GM10248 (cell line): ENCODE measurements at regions of chr5 and their contacts with region 1.

Region 1: GRCh38 chr5:172973127-172973916 is 10.2 kb upstream of the ATP6V0E1 start:
- DNase-seq: no peak
- CTCF ChIP-seq: no peak

Region 2: DNA sequence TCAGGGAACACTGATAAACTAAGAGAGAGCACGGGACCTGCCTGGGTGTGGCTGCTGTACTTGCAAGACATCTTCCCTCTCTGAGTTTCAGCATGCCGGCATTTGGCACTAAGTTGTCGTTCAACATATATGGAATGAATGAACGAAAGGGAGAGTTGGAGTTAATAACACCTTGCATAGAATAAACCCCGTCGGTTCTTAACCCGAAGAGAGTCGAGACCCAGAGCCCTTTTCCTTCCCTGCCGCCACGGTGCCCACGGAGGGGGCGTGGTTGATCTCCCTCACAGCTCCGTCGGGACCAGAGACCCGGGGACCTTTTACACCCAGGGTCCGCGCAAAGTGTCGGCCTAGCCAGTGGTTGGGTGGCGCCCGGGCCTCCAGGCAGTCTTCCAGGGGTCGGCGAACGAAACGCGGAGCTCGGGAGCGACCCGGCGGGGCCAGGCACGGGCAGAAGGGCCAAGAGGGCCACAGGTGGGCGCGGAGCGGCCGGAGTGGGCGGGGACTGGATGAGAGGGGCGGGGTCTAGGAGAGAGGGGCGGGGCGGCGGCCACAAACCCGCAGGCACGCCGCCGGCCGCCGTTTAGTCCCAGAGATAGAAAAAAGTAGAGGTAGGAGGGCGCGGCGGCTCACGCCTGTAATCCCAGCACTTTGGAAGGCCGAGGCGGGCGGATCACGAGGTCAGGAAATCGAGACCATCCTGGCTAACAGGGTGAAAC is 14.8 kb before region 1 on chr5:
- CTCF ChIA-PET with region 1: interaction called, 18 read pairs
- POLR2A ChIA-PET with region 1: no interaction called
- DNase-seq: peak; percentile 93
- CTCF ChIP-seq: no peak